Activated CD8-positive, alpha-beta T cell treated with anti-CD3 and anti-CD28 coated beads for 36 hours (primary cell): ENCODE measurements at regions of chr4 and their contacts with region 1.

Region 1: DNA sequence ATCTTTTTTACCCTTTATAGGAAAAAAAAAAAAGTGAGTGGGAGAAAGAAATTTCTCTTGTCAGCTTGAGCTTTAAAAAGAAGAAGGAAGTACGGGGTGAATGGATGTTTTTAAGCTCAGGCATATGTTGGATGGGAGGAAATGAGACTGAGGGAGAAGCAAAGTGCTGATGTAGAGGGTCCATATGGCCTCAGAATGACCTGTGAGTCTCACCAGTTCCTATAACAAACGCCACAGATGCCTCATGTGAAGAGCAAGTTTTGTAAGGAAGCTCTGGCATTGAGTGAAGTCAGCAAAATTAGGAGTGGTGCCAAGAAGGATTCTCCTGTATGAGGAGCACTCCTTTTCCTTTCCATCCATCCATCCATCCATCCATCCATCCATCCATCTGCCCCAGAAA is 214.6 kb downstream of the PTTG2 start:
- DNase-seq: no peak
- ATAC-seq: no peak
- H3K4me3 Mint-ChIP-seq: no peak overlapping the region
- H3K27ac Mint-ChIP-seq: no peak overlapping the region
- H3K4me1 Mint-ChIP-seq: peaks cover 43% of the 10 kb centered on the region
- H3K27me3 Mint-ChIP-seq: no peaks in the 10 kb centered on the region
- CTCF ChIP-seq: no peak

Region 2: DNA sequence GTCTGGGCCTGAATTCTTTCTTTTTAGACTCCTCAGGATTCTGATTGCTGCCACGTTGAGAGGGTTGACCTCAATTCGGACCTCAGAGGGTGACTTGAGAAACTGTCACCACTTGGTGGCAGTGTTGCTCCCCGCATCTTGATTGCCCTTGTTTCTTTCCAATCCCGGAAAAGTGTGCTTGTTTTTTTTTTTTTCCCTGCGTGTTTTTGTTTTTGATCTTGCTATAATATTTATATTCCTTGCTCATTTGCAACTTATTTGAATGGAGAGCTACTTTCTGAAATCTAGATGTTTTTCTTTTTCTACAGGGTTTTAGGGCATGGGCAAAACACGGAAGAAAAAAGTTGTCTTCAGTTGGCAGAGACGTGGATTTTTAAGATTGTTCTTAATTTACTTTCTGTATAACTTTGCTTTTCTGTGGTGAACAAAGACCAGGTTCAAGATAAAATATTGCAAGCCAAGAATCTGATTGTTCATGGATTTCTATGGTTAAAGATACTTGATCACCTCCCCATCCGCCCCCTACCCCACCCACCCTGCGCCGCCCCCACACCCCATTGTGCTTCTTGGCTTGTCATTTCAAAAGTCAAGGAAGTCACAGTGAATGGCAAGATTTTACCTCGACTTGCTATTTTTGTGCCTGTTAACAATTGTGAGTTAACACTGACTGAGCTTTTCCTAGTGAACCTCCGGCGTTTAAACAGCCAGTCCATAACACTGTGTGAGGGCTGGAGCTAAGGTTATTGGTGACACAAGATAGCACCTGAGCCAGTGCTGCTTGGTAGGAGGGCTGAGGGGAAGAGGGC is 112.5 kb before region 1 on chr4:
- CTCF ChIA-PET with region 1: interaction called, 23 read pairs
- POLR2A ChIA-PET with region 1: no interaction called
- intact Hi-C with region 1: loop called (anchors 5 kb)
- DNase-seq: peak; percentile 78
- ATAC-seq: peak; percentile 62
- H3K4me3 Mint-ChIP-seq: peak overlapping the region; percentile 60
- H3K27ac Mint-ChIP-seq: peak overlapping the region; percentile 73
- H3K4me1 Mint-ChIP-seq: peaks cover 13% of the 10 kb centered on the region
- H3K27me3 Mint-ChIP-seq: no peaks in the 10 kb centered on the region
- CTCF ChIP-seq: peak; percentile 97

Region 3: GRCh38 chr4:38360201-38360600 is 185.4 kb after region 1 on chr4:
- CTCF ChIA-PET with region 1: no interaction called
- POLR2A ChIA-PET with region 1: no interaction called
- intact Hi-C with region 1: no loop called
- DNase-seq: no peak
- ATAC-seq: no peak
- H3K4me3 Mint-ChIP-seq: no peak overlapping the region
- H3K27ac Mint-ChIP-seq: no peak overlapping the region
- H3K4me1 Mint-ChIP-seq: peaks cover 7% of the 10 kb centered on the region
- H3K27me3 Mint-ChIP-seq: no peaks in the 10 kb centered on the region
- CTCF ChIP-seq: no peak